ENCODE measurements at regions of chr17 and their contacts with region 1.

Region 1: GRCh38 chr17:75749545-75750389 is 15.2 kb downstream of the GALK1 start:
- H3K4me3 ChIP-seq: no peak overlapping the region; the same call in 1 of the 2 replicates
- H3K27ac ChIP-seq: no peak overlapping the region
- H3K4me1 ChIP-seq: no peaks in the 10 kb centered on the region
- CTCF ChIP-seq: peak; percentile 97

Region 2: DNA sequence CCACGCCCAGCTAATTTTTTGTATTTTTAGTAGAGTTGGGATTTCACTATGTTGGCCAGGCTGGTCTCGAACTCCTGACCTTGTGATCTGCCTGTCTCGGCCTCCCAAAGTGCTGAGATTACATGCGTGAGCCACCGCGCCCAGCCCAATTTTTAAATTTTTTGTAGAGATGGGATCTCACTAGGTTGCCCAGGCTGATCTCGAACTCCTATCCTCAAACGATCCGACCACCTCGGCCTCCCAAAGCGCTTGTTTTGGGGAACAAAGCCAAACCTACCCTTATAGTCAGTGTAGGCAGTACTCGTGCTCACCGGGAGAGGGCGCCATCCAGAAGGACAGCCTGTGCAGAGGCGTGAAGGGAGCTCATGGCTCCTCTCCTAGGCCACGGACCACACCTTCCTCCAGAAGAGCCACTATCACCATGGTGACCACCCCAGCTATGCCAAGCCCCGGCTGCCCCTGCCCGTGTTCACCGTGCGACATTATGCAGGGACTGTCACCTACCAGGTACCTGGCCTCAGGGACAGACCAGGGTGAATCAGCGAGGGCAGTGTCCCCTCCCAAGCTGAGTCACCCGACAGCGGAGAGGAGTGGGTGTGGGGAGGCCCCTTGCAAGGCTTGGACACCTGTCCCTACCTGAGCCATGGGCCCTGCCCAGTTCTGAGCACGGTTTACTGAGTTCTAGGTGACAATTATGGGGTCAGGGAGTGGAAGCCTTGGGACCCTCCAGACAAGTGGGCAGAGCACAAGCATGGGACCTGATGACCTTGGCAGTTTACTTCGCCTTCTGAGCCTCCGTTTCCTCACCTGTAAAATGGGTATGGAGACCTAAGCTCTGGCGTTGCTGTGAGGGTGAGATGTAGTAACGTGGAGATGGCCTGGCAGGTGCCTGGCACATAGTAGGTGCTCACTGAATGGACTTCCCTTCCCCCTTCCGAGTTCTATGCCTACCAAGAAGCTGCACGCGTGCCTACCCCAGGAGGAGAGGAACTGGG is 148.4 kb before region 1 on chr17:
- CTCF ChIA-PET with region 1: interaction called, 122 read pairs
- POLR2A ChIA-PET with region 1: interaction called, 4 read pairs
- H3K4me3 ChIP-seq: no peak overlapping the region
- H3K27ac ChIP-seq: no peak overlapping the region
- H3K4me1 ChIP-seq: no peaks in the 10 kb centered on the region
- CTCF ChIP-seq: peak; percentile 86

Region 3: DNA sequence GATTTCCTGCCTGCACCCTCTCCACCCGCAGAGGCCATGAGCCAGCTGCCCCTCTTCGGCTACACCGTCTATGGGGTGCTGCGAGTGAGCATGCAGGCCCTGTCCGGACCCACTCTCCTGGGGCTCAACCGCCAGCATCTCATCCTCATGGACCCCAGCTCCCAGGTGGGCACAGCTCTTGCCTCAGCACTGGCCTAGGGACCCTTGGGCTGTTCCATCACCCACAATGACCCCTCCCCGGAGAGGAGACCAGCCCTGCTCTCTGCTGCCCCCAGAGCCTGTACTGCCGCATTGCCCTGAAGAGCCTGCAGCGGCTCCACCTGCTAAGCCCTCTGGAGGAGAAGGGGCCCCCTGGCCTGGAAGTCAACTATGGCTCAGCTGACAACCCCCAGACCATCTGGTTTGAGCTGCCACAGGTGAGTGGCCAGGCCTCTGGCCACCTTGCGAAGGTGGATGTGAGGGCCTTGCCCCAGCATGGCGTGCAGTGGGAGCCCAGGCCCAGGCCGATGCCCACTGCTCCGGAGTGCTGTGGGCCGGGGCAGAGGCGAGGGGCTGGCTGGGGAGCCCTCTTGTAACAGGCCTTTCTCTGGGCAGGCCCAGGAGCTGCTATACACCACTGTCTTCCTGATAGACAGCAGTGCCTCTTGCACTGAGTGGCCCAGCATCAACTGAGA is 123.8 kb before region 1 on chr17:
- CTCF ChIA-PET with region 1: interaction called, 341 read pairs
- POLR2A ChIA-PET with region 1: no interaction called
- H3K4me3 ChIP-seq: no peak overlapping the region
- H3K27ac ChIP-seq: no peak overlapping the region
- H3K4me1 ChIP-seq: no peaks in the 10 kb centered on the region
- CTCF ChIP-seq: peak; percentile 88

Region 4: DNA sequence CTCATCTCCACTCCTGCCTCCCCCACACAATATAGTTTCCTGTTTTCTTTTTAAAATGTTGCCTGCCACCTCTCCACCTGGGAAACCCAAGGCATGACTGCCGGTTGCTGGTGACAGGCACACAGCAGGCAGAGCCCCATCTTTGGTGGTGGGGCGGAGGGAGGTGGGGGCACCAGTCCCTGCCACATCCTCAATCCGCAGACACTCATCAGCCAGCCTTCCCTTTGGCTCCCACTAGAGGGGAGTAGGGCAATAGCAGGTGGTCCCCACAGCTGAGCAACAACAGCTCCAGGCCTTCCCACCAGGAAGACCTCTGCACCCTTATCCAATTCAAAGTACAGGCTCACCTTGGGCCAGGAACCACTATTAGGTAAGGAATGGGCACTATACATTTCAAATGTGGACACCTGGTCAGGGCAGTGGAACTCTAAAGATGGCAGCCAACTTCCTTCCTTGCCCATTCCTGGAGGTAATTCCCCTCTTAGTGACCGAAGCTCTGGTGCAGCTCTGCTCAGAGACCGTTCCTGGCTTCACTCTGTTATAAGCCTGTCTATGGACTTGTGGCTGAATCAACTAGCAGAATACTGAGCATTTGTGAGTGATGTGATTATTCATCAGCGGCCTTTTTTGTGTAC is 96.7 kb before region 1 on chr17:
- CTCF ChIA-PET with region 1: interaction called, 67 read pairs
- POLR2A ChIA-PET with region 1: no interaction called
- H3K4me3 ChIP-seq: no peak overlapping the region
- H3K27ac ChIP-seq: no peak overlapping the region
- H3K4me1 ChIP-seq: no peaks in the 10 kb centered on the region
- CTCF ChIP-seq: peak; percentile 71

Region 5: DNA sequence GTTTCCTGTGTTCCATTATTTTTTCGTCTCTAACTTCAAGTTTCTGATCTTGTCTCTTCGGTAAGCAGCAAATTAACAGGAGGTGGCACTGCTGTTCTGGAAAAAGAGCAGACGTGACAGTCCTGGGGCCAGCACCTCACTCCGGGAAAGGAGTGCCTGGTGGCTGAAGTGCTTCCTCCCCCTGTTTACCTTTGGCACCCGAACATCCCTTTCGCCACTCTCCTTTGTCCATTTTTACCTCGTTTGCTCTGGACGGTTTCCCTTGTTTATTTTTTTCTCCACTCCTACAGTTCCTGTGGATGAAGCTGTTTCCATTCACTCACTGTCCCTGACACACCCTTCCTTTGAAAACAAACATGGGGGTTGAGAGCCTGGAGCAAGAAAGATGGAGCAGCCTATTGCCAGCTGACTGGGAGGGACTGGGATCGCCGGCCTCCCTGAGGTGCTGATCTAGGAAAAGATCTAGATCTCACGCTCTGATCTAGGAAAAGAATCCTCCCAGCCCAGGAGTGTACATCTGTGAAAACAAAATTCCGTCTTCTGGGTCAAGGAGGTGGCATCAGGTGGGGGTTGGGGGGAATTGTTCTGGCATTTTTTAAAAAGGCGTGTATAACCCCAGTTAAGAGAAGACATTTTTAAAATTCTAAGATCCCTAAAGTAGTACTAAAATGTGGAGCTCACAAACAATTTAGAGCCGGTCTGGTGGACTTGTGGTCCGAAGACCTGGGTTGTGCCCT is 69.9 kb before region 1 on chr17:
- CTCF ChIA-PET with region 1: interaction called, 308 read pairs
- POLR2A ChIA-PET with region 1: interaction called, 9 read pairs
- H3K4me3 ChIP-seq: no peak overlapping the region
- H3K27ac ChIP-seq: no peak overlapping the region
- H3K4me1 ChIP-seq: peaks cover 4% of the 10 kb centered on the region; the same call in 1 of the 2 replicates
- CTCF ChIP-seq: 0 out of 2 replicates have a peak, but pooled peaks have one; percentile 10

Region 6: DNA sequence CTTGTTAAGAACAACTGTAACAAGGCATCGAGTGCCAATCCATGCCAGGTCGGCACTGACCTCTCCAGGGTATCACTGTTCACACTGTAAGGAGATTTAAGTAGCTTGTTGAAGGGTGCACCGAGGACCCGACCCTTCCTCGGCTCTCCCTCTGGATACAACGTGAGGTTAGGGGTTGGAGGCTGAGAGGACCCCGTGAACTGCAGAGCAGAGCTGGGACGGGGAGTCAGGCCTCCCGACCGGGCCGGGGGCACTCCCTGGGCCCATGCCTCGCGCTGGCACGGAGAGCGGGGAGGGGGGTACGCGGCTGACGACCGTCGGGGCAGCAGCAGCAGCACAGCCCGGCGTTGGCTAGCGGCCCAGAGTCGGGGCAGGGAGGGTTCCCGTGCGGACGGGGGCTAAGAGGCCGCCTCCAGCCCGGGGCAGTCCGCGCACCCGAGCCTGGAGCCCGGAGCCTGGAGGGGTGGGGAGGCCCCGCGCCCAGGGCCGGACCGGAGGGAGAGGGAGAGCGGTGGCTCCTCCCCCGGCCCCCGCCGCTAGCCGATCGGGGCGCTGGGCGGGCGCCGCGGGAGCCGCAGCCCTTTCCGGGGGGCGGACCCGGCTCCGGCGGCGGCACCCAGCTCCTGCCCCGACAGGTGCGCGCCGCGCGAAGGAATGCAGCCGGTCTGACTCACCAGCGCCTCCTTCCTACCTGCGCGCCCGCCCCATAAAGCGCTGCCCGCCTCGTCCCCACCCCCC is 28.9 kb before region 1 on chr17 and contains the start of gene ITGB4:
- CTCF ChIA-PET with region 1: interaction called, 51 read pairs
- POLR2A ChIA-PET with region 1: no interaction called
- H3K4me3 ChIP-seq: peak within 1 kb of the TSS; percentile 35
- H3K27ac ChIP-seq: no peak within 1 kb of the TSS
- H3K4me1 ChIP-seq: no peaks in the 10 kb centered on the region; the same call in 1 of the 2 replicates
- CTCF ChIP-seq: no peak

Region 7: GRCh38 chr17:75764711-75765421 is 15.1 kb after region 1 on chr17 and contains the start of gene GALK1:
- CTCF ChIA-PET with region 1: interaction called, 170 read pairs
- POLR2A ChIA-PET with region 1: interaction called, 4 read pairs
- H3K4me3 ChIP-seq: peak within 1 kb of the TSS; percentile 63
- H3K27ac ChIP-seq: peak within 1 kb of the TSS; percentile 70
- H3K4me1 ChIP-seq: peaks cover 3% of the 10 kb centered on the region; the same call in 1 of the 2 replicates
- CTCF ChIP-seq: peak; percentile 93